ENCODE measurements at regions of chr4 and their contacts with region 1.

Region 1: GRCh38 chr4:165580351-165580905 is 201.6 kb downstream of the CPE start:
- DNase-seq: peak; percentile 100
- H3K4me3 ChIP-seq: no peak overlapping the region
- H3K27ac ChIP-seq: peak overlapping the region; percentile 90
- H3K4me1 ChIP-seq: peaks cover 23% of the 10 kb centered on the region
- H3K27me3 ChIP-seq: no peaks in the 10 kb centered on the region
- CTCF ChIP-seq: no peak

Region 2: DNA sequence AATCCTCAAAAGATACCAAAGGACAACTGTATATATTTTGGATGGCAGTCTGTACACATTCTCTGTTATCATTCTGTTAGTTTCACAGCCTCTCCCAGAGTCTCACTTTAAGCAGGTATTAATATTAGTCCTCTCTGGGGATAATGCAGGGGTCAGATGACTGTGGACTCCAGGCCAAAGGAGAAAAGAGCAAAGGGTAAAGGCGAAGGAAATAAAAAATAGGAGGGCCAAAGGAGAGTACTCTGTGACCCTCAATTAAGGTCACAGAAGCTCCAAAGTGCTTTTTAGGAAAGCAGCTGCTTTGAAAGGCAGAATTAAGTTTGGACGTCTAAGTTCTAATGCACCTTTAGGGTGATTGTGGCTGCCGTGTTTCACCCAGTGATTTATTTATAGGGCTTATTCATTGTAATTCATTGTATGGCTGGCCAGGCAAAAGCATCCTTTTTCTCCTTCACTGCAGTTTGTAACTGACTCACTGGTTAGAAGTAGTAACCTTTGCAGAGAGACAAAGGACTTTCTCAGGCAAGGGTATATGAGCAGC is 245.2 kb before region 1 on chr4:
- CTCF ChIA-PET with region 1: no interaction called
- dilution Hi-C with region 1: no loop called
- in situ Hi-C with region 1: no loop called
- intact Hi-C with region 1: no loop called
- DNase-seq: no peak
- H3K4me3 ChIP-seq: no peak overlapping the region
- H3K27ac ChIP-seq: no peak overlapping the region
- H3K4me1 ChIP-seq: peaks cover 25% of the 10 kb centered on the region
- H3K27me3 ChIP-seq: no peaks in the 10 kb centered on the region
- CTCF ChIP-seq: no peak

Region 3: GRCh38 chr4:165635261-165635838 is 54.9 kb after region 1 on chr4:
- CTCF ChIA-PET with region 1: no interaction called
- dilution Hi-C with region 1: loop called (anchors 5 kb)
- in situ Hi-C with region 1: no loop called
- intact Hi-C with region 1: no loop called
- DNase-seq: no peak
- H3K4me3 ChIP-seq: no peak overlapping the region
- H3K27ac ChIP-seq: no peak overlapping the region
- H3K4me1 ChIP-seq: peaks cover 28% of the 10 kb centered on the region
- H3K27me3 ChIP-seq: no peaks in the 10 kb centered on the region
- CTCF ChIP-seq: no peak

Region 4: DNA sequence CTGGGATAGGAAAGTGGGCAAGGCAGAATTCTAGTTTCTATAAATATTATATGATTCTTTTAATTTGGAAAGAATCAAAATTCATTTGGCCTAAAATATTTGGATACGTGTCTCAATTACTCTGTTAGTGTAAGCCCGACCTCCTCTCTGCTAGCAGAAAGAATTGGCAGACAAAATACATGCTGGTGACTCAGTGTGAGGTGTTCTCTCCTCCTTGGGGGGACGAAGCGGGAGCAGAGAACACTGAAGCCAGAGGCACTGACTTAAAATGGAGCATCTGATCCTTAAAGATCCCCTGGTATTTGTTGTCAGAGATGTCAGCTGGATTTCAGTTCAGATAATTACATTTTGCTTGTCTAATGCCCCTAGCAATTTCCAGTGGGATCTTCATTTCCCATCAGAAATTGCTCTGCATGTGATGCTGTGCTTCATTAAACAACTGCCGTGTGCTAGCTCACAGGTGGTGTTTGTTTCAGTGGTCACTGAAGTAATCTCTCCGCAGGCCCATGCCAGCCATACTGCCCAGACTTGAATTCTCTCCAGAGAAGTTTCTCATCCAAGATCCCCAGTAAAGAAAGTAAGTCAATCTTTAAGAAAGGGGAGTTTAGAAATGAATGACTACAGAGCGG is 103.9 kb after region 1 on chr4:
- CTCF ChIA-PET with region 1: no interaction called
- dilution Hi-C with region 1: no loop called
- in situ Hi-C with region 1: no loop called
- intact Hi-C with region 1: no loop called
- DNase-seq: peak; percentile 90
- H3K4me3 ChIP-seq: peak overlapping the region; percentile 15 to 35 (median 20)
- H3K27ac ChIP-seq: peak overlapping the region; percentile 72
- H3K4me1 ChIP-seq: peaks cover 38% of the 10 kb centered on the region
- H3K27me3 ChIP-seq: no peaks in the 10 kb centered on the region
- CTCF ChIP-seq: no peak

Region 5: DNA sequence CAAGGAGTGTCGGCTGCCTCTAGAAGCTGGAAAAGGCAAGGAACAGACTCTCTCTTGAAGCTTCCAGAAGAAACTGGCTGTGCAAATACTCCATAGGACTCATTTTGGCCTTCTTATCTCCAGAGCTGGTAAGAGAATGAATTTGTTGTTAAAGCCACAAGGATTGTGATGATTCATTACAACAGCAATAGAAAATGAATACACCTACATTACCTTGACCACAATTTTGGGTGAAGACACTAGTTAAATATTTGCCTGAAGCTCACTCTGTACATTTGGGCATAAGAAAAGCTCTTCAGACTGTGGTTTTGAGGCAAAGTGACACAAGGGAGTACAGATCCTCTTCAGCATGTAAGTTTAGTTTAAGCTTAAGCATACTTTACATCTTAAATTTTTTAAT is 158.1 kb after region 1 on chr4:
- CTCF ChIA-PET with region 1: no interaction called
- dilution Hi-C with region 1: no loop called
- in situ Hi-C with region 1: no loop called
- intact Hi-C with region 1: loop called (anchors 5 kb)
- DNase-seq: peak; percentile 96
- H3K4me3 ChIP-seq: peak overlapping the region; percentile 40 to 75 (median 59)
- H3K27ac ChIP-seq: peak overlapping the region; percentile 93
- H3K4me1 ChIP-seq: peaks cover 26% of the 10 kb centered on the region
- H3K27me3 ChIP-seq: no peaks in the 10 kb centered on the region
- CTCF ChIP-seq: no peak